Sigmoid colon (tissue), 7 donors: ENCODE measurements at regions of chr14 and their contacts with region 1.

Region 1: GRCh38 chr14:50311975-50312733 is at the starts of genes DMAC2L and L2HGDH:
- DNase-seq: peak; percentile 95
- H3K4me3 ChIP-seq: peak within 1 kb of the TSS; percentile 68 to 93 (median 84)
- H3K27ac ChIP-seq: peak within 1 kb of the TSS; percentile 88 to 93 (median 92)
- H3K4me1 ChIP-seq: peaks cover 0 to 21% (median 15%) of the 10 kb centered on the region in 4 donors
- H3K27me3 ChIP-seq: no peaks in the 10 kb centered on the region
- CTCF ChIP-seq: no peak
- EP300 ChIP-seq: no peak
- POLR2A ChIP-seq: peak; percentile 37 to 79
- total RNA-seq, gene DMAC2L: 12.2 to 37.1 (median 28.5) TPM
- total RNA-seq, gene L2HGDH: 2.7 to 6.3 (median 3.6) TPM

Region 2: GRCh38 chr14:49867831-49868723 is 444.1 kb before region 1 on chr14:
- intact Hi-C with region 1: loop called (anchors 10 kb)
- DNase-seq: peak; percentile 98
- H3K4me3 ChIP-seq: peak overlapping the region; percentile 50 to 65 (median 60)
- H3K27ac ChIP-seq: peak overlapping the region; percentile 83 to 96 (median 92)
- H3K4me1 ChIP-seq: peaks cover 0 to 33% (median 21%) of the 10 kb centered on the region in 4 donors
- H3K27me3 ChIP-seq: no peaks in the 10 kb centered on the region
- CTCF ChIP-seq: no peak
- EP300 ChIP-seq: peak in 1 of 4 donors; percentile 26
- POLR2A ChIP-seq: peak; percentile 65 to 68

Region 3: DNA sequence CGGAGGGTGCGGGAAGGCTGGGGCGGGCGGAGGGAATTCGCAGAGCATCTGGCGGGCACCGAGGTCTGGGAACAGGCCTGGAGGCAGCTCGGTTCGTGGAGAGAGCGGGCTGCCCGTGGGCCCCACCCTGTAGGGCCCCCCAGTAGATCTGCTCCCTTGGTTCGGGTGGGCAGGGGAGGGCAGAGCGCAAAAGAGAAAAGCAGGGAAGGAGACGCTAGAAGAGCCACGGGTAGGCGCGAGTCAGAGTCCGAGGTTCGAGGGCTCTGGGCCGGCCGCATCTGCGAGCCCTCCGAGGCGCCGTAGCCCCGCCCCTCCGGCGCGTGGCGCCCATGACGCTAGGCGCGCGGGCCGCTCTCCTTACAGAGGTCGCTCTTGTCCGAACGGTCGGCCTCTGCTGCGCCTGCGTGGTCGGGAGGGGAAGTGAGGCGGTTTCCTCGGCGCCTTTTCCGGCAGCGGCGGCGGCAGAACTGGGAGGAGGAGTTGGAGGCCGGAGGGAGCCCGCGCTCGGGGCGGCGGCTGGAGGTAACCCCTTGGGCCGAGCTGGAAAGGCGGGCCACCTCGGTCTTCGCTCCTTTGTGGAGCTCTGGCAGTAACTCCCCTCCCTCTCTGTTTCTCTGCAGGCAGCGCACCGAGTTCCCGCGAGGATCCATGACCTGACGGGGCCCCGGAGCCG is 419.4 kb before region 1 on chr14 and contains the start of gene ARF6:
- intact Hi-C with region 1: loop called (anchors 2 kb)
- DNase-seq: peak; percentile 99
- H3K4me3 ChIP-seq: peak within 1 kb of the TSS; percentile 60 to 96 (median 88)
- H3K27ac ChIP-seq: peak within 1 kb of the TSS; percentile 91 to 100 (median 99)
- H3K4me1 ChIP-seq: peaks cover 0 to 44% (median 42%) of the 10 kb centered on the region in 4 donors
- H3K27me3 ChIP-seq: no peaks in the 10 kb centered on the region
- CTCF ChIP-seq: no peak
- EP300 ChIP-seq: peak in 1 of 4 donors; percentile 77
- POLR2A ChIP-seq: peak; percentile 94 to 95
- total RNA-seq, gene ARF6: 33.8 to 45.6 (median 39.4) TPM

Region 4: GRCh38 chr14:50231475-50232275 is 80.5 kb before region 1 on chr14 and contains the start of gene SOS2:
- intact Hi-C with region 1: loop called (anchors 5 kb)
- DNase-seq: peak; percentile 94
- H3K4me3 ChIP-seq: peak within 1 kb of the TSS; percentile 59 to 89 (median 70)
- H3K27ac ChIP-seq: peak within 1 kb of the TSS; percentile 95 to 99 (median 98)
- H3K4me1 ChIP-seq: peaks cover 0 to 53% (median 38%) of the 10 kb centered on the region in 4 donors
- H3K27me3 ChIP-seq: no peaks in the 10 kb centered on the region
- CTCF ChIP-seq: no peak
- EP300 ChIP-seq: no peak
- POLR2A ChIP-seq: peak; percentile 12 to 49
- total RNA-seq, gene SOS2: 31.9 to 40.4 (median 38.7) TPM

Region 5: GRCh38 chr14:50351016-50351415 is 38.9 kb after region 1 on chr14:
- intact Hi-C with region 1: no loop called
- DNase-seq: no peak
- H3K4me3 ChIP-seq: no peak overlapping the region
- H3K27ac ChIP-seq: peak overlapping the region in 2 of 4 donors; percentile 66 to 70
- H3K4me1 ChIP-seq: peaks cover 0 to 75% (median 59%) of the 10 kb centered on the region in 4 donors
- H3K27me3 ChIP-seq: no peaks in the 10 kb centered on the region
- CTCF ChIP-seq: no peak
- EP300 ChIP-seq: no peak
- POLR2A ChIP-seq: no peak

Region 6: GRCh38 chr14:50667996-50668825 is 356.1 kb after region 1 on chr14 and contains the start of gene SAV1:
- intact Hi-C with region 1: loop called (anchors 5 kb)
- DNase-seq: peak; percentile 92
- H3K4me3 ChIP-seq: peak within 1 kb of the TSS; percentile 75 to 97 (median 87)
- H3K27ac ChIP-seq: peak within 1 kb of the TSS; percentile 92 to 100 (median 97)
- H3K4me1 ChIP-seq: peaks cover 0 to 26% (median 21%) of the 10 kb centered on the region in 4 donors
- H3K27me3 ChIP-seq: no peaks in the 10 kb centered on the region
- CTCF ChIP-seq: no peak
- EP300 ChIP-seq: peak in 2 of 4 donors; percentile 20 to 21
- POLR2A ChIP-seq: peak; percentile 41 to 64
- total RNA-seq, gene SAV1: 32.0 to 38.2 (median 35.3) TPM

Region 7: DNA sequence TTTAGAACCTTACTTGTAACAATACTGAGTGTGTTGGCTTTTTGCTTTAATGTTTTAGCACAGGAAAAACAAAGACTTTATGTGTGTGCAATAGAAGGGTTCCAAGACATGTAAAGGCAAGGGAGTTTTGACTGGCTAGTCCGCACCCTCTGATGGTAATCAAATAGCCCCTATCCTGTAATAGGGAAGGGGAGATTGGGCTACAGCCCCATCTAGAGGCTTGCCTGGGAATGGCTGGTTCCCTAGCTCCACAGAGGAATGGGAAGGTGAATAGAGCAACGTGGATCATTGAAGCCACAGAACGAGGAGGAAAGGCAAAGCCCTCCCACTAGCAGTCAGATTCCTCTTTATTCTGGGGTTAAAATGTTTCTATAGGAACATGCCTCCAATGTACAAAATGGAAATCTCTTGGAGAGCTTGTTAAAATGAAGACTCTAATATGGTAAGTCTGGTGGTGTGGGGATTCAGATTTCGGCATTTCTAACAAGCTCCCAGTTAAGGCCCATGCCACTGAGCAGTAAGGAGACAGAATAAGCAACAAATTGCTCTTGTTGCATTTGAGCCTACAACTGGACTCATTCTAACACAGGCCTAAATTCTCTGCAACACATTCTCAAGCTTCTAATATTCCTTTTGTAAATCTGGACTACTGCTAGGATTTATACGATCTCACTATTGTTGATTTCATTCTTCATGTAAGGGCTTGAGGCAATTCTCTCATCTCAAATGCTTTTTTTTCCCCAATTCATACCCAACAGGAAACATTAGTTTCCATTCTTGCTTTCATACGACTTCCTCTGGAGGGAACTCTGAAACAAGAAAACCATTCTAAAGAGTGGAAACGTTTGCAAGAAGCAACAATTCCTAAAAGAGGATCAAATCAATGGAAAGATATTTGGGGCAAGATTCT is 461.7 kb after region 1 on chr14:
- intact Hi-C with region 1: loop called (anchors 10 kb)
- DNase-seq: no peak
- H3K4me3 ChIP-seq: no peak overlapping the region
- H3K27ac ChIP-seq: peak overlapping the region in 1 of 4 donors; percentile 63
- H3K4me1 ChIP-seq: peaks cover 0 to 12% (median 9%) of the 10 kb centered on the region in 4 donors
- H3K27me3 ChIP-seq: no peaks in the 10 kb centered on the region
- CTCF ChIP-seq: peak in 3 of 4 experiments; percentile 29 to 48 (median 33)
- EP300 ChIP-seq: no peak
- POLR2A ChIP-seq: no peak